Activated T-helper 2 cell treated with anti-CD3 and anti-CD28 coated beads, Interferon-gamma antibody, Interleukin-2, Interleukin-4, amounts not matched to agents 10 μg/mL and 5 μg/mL and 100 μg/mL, durations not matched to agents 14 hours and 24 hours and 36 hours (primary cell): ENCODE measurements at regions of chr3 and their contacts with region 1.

Region 1: GRCh38 chr3:10185804-10186762 is 21.4 kb downstream of the IRAK2 start:
- DNase-seq: peak; percentile 25
- H3K4me3 Mint-ChIP-seq: peak overlapping the region; percentile 9
- H3K27ac Mint-ChIP-seq: peak overlapping the region; percentile 66
- H3K4me1 Mint-ChIP-seq: peaks cover 53% of the 10 kb centered on the region
- H3K27me3 Mint-ChIP-seq: no peaks in the 10 kb centered on the region

Region 2: DNA sequence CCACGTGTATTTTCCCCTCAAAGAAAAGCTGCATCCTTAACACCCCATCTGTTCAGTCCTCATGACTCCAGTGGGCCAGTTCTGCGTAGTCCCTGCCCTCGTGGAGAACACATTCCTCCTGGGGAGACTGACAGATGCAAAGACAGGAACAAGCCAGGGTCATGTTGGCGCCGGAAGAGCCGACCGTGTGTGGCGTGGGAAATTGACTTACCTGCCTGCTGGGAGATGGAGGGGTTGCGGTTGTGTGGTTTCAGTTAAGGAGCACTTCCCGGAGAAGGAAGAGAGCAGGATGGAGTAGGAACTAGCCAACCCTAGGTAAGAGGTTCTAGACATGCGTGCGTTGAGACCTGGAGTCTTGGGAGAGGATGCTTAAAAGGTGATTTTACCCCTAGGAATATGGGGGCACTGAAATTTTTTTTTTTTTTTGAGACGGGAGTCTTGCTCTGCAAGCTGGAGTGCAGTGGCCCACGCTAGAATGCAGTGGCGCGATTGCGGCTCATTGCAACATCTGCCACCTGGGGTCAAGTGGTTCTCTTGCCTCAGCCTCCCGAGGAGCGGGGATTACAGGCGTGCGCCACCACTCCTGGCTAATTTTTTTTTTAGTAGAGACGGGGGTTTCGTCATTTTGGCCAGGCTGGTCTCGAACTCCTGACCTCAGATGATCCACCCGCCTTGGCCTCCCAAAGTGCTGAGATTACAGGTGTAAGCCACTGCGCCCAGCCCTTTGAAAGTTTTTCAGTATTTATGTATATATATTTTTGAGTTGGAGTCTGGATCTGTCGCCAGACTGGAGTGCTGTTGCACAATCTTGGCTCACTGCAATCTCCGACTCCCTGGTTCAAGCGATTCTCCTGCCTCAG is 43.1 kb before region 1 on chr3:
- intact Hi-C with region 1: loop called (anchors 1 kb)
- DNase-seq: no peak
- H3K4me3 Mint-ChIP-seq: peak overlapping the region; percentile 94
- H3K27ac Mint-ChIP-seq: peak overlapping the region; percentile 92
- H3K4me1 Mint-ChIP-seq: peaks cover 24% of the 10 kb centered on the region
- H3K27me3 Mint-ChIP-seq: no peaks in the 10 kb centered on the region

Region 3: DNA sequence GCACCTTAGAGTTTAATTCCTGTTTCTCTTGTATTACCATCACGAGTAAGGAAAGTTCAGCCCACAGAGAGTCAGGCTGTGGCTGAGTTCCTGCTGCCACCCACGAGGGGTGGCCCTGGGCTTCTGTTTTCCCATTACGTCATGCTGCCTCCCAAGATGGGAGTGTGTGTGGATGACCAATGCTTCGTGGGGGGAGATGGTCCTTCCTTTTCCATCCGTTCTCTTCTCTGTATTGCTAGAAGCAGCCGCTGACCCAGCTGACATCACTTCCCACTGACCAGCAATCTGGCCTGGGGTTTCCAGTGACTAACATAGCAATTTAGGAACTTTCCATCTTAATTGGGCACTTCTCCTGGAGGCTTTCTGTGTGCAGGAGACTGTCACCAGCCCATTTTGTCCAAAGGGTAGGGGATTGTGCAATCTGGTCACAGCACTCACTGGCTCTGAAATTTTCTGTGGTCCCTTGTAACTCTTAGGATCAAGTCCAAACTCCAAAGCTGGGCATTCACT is 12.1 kb before region 1 on chr3:
- intact Hi-C with region 1: loop called (anchors 2 kb)
- DNase-seq: no peak
- H3K4me3 Mint-ChIP-seq: no peak overlapping the region
- H3K27ac Mint-ChIP-seq: peak overlapping the region; percentile 11
- H3K4me1 Mint-ChIP-seq: peaks cover 14% of the 10 kb centered on the region
- H3K27me3 Mint-ChIP-seq: no peaks in the 10 kb centered on the region

Region 4: DNA sequence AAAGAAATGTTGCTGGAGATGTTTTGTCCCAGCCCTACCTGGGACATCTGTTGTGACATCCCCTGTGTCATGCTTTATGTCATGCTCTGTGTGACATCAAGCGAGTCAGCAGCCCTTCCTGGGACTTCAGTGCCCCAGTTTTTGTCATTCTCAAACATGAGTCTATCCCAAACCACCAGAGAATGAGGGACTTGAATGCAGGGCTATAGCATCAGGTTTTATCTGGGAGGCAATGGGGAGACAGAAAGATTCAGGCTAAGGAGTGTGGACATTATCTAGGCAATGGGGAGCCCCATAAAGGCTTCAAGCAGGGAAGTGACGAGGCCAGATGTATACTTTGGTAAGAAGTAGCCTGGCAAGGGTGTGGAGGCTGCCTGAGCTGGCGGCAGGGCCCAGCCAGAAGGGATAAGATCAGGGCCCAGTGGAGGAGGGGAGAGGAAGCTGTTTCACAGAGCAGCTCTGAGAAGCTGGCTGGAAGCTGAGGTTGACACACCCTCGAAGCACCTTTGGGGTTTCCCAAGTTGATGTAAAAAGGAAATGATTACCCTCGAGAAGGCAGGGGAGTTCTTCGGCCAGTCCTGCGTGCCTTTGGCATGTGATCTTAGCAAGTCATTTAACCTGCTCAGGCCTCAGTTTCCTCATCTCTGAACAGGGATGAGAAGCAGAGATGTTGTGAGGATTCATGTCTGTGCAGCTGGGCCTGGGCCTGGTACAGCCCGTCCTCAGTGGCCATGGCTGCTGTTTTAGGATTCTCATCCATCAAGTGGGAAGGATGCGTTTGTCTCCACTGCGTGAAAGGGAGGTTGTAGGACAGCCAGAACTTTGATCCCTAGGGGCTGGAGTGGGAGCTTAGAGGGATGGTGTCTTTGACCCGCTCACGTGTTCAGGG is 12.9 kb after region 1 on chr3:
- intact Hi-C with region 1: loop called (anchors 1 kb)
- DNase-seq: peak; percentile 72
- H3K4me3 Mint-ChIP-seq: peak overlapping the region; percentile 15
- H3K27ac Mint-ChIP-seq: peak overlapping the region; percentile 91
- H3K4me1 Mint-ChIP-seq: peaks cover 65% of the 10 kb centered on the region
- H3K27me3 Mint-ChIP-seq: no peaks in the 10 kb centered on the region

Region 5: GRCh38 chr3:10205451-10206165 is 19.5 kb after region 1 on chr3:
- intact Hi-C with region 1: loop called (anchors 2 kb)
- DNase-seq: no peak
- H3K4me3 Mint-ChIP-seq: no peak overlapping the region
- H3K27ac Mint-ChIP-seq: peak overlapping the region; percentile 21
- H3K4me1 Mint-ChIP-seq: peaks cover 39% of the 10 kb centered on the region
- H3K27me3 Mint-ChIP-seq: no peaks in the 10 kb centered on the region

Region 6: DNA sequence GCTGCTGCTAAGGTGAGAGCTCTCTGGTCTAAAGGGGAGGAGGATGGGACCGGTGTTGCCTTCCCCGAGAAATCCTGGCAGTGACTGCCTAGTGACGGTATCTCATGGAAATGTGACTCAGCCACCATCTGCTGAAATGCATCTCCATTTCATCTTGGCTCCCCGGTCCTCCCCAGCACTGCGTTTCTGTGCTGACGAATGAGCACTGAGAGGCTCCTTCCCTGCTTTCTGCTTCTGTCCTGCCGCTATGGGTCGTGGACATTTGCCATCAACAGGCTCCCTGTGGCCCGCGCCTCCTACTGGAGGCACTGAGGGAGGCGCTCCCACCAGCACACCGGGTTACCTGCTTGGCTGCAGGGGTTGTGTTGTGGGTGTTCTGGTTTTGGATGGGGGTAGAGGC is 148.4 kb after region 1 on chr3:
- intact Hi-C with region 1: no loop called
- DNase-seq: no peak
- H3K4me3 Mint-ChIP-seq: no peak overlapping the region
- H3K27ac Mint-ChIP-seq: no peak overlapping the region
- H3K4me1 Mint-ChIP-seq: peaks cover 3% of the 10 kb centered on the region
- H3K27me3 Mint-ChIP-seq: peaks cover 6% of the 10 kb centered on the region